ENCODE measurements at regions of chr6 and their contacts with region 1.

Region 1: DNA sequence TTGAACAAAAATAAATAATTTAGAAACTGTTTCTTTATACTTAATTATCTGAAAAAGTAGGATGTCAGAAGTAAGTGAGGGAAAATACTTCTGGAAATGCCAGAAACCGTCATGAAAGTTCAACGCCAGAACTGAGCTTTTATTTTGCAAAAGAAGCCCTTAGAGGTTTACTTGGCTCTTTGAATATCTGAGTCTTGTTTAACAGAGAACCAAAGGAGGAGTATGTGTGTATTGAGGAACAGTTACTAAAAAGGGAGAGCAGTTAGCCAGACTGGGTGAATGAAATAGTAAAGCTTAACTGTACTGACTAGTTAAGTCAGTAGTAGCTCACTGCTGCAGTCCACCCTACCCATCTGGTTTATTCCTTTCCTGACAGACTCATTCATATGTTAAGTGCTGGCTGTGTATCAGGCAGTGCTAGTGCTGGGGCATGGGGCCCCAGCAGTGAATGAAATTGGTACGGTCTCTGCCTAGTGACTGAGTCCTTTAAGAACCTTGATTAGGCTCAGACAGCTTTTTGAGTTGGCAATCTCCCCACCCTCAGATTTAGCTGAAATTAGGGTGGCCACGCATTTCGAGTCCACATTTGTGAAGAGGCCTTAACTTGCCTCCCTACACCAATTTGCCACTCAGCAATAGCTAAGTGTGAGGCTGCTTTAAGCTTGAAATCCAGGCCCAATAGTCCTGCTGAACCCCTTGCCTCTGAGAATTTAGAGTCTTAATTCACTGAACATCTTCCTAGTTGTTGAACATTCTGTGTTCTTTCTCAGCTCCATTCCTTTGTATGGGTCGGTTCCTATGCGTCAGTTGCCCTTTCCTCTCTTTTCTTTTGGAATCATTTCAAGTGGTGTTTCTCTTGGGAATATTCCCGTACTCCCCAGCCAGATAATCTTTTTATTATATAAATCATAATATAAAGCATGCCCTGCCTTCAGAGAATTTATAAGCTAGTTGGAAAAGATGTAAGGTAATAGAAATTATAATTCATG is 20.2 kb downstream of the MAP3K4 start:
- DNase-seq: no peak
- ATAC-seq: peak; percentile 75
- H3K4me3 ChIP-seq: no peak overlapping the region
- H3K27ac ChIP-seq: no peak overlapping the region
- H3K4me1 ChIP-seq: no peaks in the 10 kb centered on the region
- H3K27me3 ChIP-seq: no peaks in the 10 kb centered on the region
- CTCF ChIP-seq: no peak
- EP300 ChIP-seq: no peak
- POLR2A ChIP-seq: no peak
- RAD21 ChIP-seq: no peak

Region 2: DNA sequence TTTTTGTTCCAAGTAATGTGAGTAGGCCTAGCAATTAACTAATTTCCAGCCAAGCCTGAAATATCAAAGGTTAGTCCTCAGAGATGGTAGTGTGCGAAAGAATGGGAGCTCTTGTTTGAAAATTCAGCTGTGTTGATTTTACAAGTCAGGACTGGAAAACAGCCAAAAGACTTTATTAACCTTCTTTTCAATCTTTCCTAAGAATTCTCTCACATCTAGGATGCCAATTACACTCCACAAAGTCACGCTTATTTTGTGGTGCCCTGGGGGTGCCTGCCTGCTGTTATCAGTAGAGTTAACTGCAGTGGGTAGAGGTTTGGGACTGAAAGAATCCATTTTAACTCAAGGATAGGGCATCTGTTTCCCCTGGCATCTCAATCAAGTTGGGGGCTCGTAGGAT is 50.9 kb before region 1 on chr6:
- CTCF ChIA-PET with region 1: no interaction called
- POLR2A ChIA-PET with region 1: no interaction called
- in situ Hi-C with region 1: no loop called
- intact Hi-C with region 1: no loop called
- DNase-seq: no peak
- ATAC-seq: no peak
- H3K4me3 ChIP-seq: no peak overlapping the region
- H3K27ac ChIP-seq: no peak overlapping the region
- H3K4me1 ChIP-seq: peaks cover 3 to 5% of the 10 kb centered on the region in 2 experiments; a peak in 4 of 5 replicates
- H3K27me3 ChIP-seq: peaks cover 0 to 14% of the 10 kb centered on the region in 2 experiments; a peak in 1 of 5 replicates
- CTCF ChIP-seq: no peak
- EP300 ChIP-seq: no peak
- POLR2A ChIP-seq: no peak
- RAD21 ChIP-seq: no peak

Region 3: DNA sequence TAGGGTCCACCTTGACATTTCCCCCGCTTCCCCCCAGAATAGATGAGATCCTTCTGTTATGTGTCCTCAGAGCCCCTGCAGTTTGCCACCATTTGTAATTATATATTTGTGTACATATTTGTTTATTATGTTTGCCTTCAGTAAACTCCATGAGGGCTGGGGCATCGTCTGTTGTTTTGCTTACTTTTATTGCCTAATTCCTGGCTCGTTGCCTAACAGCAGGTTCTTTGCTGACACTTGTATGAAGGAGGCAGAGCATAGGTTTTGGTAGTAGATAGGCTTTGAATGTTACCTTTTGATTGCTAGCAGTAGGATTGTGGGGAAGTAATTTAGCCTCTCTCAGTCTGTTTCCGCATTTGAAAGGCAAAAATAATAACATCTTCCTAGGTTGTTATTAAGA is 10.4 kb before region 1 on chr6:
- CTCF ChIA-PET with region 1: no interaction called
- POLR2A ChIA-PET with region 1: interaction called, 14 read pairs
- in situ Hi-C with region 1: no loop called
- intact Hi-C with region 1: no loop called
- DNase-seq: no peak
- ATAC-seq: peak; percentile 51
- H3K4me3 ChIP-seq: no peak overlapping the region
- H3K27ac ChIP-seq: no peak overlapping the region
- H3K4me1 ChIP-seq: peaks cover 0 to 5% of the 10 kb centered on the region in 2 experiments; a peak in 2 of 5 replicates
- H3K27me3 ChIP-seq: no peaks in the 10 kb centered on the region
- CTCF ChIP-seq: no peak
- EP300 ChIP-seq: no peak
- POLR2A ChIP-seq: no peak
- RAD21 ChIP-seq: no peak

Region 4: GRCh38 chr6:161023316-161023715 is 11.5 kb after region 1 on chr6:
- CTCF ChIA-PET with region 1: no interaction called
- POLR2A ChIA-PET with region 1: interaction called, 21 read pairs
- in situ Hi-C with region 1: no loop called
- intact Hi-C with region 1: no loop called
- DNase-seq: no peak
- ATAC-seq: no peak
- H3K4me3 ChIP-seq: no peak overlapping the region
- H3K27ac ChIP-seq: no peak overlapping the region
- H3K4me1 ChIP-seq: peaks cover 0 to 5% of the 10 kb centered on the region in 2 experiments; a peak in 2 of 5 replicates
- H3K27me3 ChIP-seq: no peaks in the 10 kb centered on the region
- CTCF ChIP-seq: no peak
- EP300 ChIP-seq: no peak
- POLR2A ChIP-seq: no peak
- RAD21 ChIP-seq: no peak

Region 5: GRCh38 chr6:161029195-161029809 is 17.5 kb after region 1 on chr6:
- CTCF ChIA-PET with region 1: no interaction called
- POLR2A ChIA-PET with region 1: interaction called, 21 read pairs
- in situ Hi-C with region 1: no loop called
- intact Hi-C with region 1: no loop called
- DNase-seq: no peak
- ATAC-seq: 0 out of 3 replicates have a peak, but pooled peaks have one; percentile 9
- H3K4me3 ChIP-seq: no peak overlapping the region
- H3K27ac ChIP-seq: no peak overlapping the region
- H3K4me1 ChIP-seq: peaks cover 0 to 24% of the 10 kb centered on the region in 2 experiments; a peak in 3 of 5 replicates
- H3K27me3 ChIP-seq: no peaks in the 10 kb centered on the region
- CTCF ChIP-seq: no peak
- EP300 ChIP-seq: no peak
- POLR2A ChIP-seq: no peak
- RAD21 ChIP-seq: no peak

Measured in K562 (cell line).